ENCODE measurements at regions of chr6 and their contacts with region 1.

Region 1: GRCh38 chr6:73608761-73609160 is 45.0 kb downstream of the SLC17A5 start:
- DNase-seq: no peak
- H3K4me3 ChIP-seq: no peak overlapping the region
- H3K27ac ChIP-seq: no peak overlapping the region
- H3K4me1 ChIP-seq: no peaks in the 10 kb centered on the region
- H3K27me3 ChIP-seq: no peaks in the 10 kb centered on the region
- CTCF ChIP-seq: no peak
- POLR2A ChIP-seq: no peak

Region 2: DNA sequence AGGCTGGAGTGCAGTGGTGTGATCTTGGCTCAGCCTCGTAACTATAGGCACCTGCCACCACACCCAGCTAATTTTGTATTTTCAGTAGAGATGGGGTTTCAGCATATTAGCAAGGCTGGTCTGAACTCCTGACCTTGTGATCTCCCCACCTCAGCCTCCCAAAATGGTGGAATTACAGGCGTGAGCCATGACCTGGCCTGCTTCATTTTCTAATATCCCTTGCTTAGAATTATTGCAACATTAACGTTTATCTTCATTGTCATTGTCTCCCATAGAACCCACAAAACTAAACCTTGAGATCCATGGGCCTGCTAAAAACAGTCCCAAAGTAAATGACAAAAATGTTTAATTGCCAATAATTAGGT is 94.0 kb before region 1 on chr6:
- intact Hi-C with region 1: loop called (anchors 5 kb)
- DNase-seq: no peak
- H3K4me3 ChIP-seq: no peak overlapping the region
- H3K27ac ChIP-seq: peak overlapping the region; percentile 54
- H3K4me1 ChIP-seq: peaks cover 46% of the 10 kb centered on the region
- H3K27me3 ChIP-seq: no peaks in the 10 kb centered on the region
- CTCF ChIP-seq: no peak
- POLR2A ChIP-seq: no peak

Region 3: DNA sequence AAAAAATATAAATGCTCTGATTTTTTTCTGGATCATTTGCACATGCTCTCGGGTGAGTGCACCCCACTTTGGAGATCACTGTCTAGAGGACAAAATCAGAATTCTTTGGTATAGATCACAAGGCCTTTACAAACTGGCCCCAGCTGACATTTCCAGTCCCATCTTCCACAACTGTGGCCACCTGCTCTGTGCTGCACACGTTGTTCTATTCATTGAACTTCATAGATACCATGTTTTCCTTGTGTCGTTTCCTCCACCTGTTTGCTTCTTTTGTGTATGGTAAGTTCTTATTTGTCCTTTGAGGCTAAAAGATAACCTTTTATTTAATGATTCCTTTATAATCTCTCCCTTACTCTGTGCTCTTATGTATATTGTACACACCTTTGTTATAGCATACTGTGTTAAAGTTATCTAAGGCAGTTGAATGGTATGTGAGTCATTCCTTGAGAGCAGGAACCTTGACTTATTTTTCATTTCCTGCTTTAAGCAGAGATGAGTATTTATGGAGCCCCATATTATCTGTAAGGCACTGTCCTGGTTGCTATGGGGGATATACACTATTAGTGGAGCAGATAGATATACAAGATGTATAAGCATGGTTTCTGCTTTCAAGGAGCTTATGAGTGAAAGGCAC is 57.0 kb after region 1 on chr6:
- intact Hi-C with region 1: no loop called
- DNase-seq: no peak
- H3K4me3 ChIP-seq: no peak overlapping the region
- H3K27ac ChIP-seq: no peak overlapping the region
- H3K4me1 ChIP-seq: no peaks in the 10 kb centered on the region
- H3K27me3 ChIP-seq: no peaks in the 10 kb centered on the region
- CTCF ChIP-seq: no peak
- POLR2A ChIP-seq: no peak